ENCODE measurements at regions of chr3 and their contacts with region 1.

Region 1: DNA sequence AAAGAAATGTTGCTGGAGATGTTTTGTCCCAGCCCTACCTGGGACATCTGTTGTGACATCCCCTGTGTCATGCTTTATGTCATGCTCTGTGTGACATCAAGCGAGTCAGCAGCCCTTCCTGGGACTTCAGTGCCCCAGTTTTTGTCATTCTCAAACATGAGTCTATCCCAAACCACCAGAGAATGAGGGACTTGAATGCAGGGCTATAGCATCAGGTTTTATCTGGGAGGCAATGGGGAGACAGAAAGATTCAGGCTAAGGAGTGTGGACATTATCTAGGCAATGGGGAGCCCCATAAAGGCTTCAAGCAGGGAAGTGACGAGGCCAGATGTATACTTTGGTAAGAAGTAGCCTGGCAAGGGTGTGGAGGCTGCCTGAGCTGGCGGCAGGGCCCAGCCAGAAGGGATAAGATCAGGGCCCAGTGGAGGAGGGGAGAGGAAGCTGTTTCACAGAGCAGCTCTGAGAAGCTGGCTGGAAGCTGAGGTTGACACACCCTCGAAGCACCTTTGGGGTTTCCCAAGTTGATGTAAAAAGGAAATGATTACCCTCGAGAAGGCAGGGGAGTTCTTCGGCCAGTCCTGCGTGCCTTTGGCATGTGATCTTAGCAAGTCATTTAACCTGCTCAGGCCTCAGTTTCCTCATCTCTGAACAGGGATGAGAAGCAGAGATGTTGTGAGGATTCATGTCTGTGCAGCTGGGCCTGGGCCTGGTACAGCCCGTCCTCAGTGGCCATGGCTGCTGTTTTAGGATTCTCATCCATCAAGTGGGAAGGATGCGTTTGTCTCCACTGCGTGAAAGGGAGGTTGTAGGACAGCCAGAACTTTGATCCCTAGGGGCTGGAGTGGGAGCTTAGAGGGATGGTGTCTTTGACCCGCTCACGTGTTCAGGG is 34.3 kb downstream of the IRAK2 start:
- DNase-seq: peak; percentile 91
- H3K4me3 Mint-ChIP-seq: peak overlapping the region; percentile 22
- H3K27ac Mint-ChIP-seq: peak overlapping the region; percentile 98
- H3K4me1 Mint-ChIP-seq: peaks cover 71% of the 10 kb centered on the region
- H3K27me3 Mint-ChIP-seq: no peaks in the 10 kb centered on the region

Region 2: DNA sequence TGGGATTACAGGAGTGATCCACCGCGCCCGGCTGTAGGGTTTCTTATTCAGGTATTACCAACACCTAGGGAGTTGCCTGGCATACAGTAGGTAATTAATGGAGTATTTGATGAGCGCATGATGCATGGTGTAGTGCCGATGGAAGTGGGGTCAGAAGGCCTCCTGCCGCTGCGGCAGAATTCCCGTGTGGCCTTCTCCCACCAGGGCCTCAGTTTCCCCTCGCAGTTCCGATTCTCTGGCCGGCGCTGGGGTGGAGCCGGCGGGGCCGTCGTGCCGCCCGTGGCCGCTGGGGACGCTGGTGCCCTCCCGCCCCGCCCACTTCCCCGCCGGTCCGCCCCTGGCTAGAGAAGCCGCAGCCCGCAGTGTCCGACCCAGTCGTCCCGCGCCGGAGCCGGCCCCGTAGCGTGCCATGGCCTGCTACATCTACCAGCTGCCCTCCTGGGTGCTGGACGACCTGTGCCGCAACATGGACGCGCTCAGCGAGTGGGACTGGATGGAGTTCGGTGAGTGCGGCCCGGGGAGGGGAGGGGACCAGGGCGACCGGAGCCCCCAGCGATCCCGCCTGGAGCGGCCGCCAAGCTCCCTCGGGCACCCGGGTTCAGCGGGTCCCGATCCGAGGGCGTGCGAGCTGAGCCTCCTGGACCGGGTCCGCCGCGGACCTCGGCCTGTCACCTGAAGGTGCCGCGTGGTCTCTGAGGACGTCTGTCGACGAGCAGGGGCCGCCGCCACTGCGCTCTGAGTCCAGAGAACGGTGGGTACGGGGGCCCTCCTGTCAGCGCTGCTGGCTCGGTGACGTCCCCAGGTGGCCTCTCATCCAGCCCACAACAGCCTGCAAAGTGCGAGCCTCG is 34.2 kb before region 1 on chr3 and contains the start of gene IRAK2:
- CTCF ChIA-PET with region 1: interaction called, 5 read pairs
- intact Hi-C with region 1: loop called (anchors 2 kb)
- DNase-seq: peak; percentile 62
- H3K4me3 Mint-ChIP-seq: peak within 1 kb of the TSS; percentile 75
- H3K27ac Mint-ChIP-seq: no peak within 1 kb of the TSS
- H3K4me1 Mint-ChIP-seq: peaks cover 23% of the 10 kb centered on the region
- H3K27me3 Mint-ChIP-seq: no peaks in the 10 kb centered on the region
- total RNA-seq, gene IRAK2: 6.4 to 6.9 TPM

Region 3: DNA sequence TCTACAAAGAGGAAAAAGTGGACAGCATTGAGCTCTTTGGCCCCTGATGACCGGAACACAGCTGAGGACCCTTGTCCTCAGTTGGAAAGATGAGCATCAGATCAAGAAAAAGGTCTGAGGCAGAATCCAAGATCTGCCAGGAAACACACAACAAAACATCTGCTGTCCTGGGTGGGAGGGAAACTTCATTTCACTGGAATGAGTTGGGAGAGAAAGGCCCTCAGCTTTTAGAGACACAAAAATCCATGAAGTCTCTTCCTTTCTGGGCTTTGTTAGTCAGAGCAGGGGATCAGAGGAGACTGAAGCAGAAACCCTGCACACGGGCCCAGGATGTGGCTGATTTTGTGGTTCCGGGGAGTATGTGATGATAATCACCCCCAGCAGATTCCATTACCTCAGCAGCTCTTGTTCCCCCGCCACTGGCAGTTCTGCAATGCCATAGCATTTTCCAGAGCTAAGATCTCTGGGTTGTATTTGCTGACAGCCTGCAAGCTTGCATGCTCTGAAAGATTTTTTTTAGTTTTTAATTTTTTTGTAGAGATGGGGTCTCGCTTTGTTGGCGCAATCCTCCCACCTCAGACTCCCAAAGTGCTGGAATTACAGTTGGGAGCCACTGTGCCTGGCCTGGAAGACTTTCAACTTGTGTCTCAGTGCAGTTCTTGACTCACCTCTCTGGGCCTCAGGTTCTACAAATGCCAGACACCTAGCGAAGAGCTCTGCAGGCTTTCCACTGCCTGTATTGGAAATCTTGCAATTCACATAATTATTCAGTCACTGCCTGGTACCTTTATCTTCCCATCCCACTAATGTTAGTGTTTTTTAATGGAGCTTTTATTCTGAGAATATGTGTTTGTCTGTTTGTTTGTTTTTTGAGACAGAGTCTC is 43.4 kb after region 1 on chr3:
- CTCF ChIA-PET with region 1: no interaction called
- intact Hi-C with region 1: loop called (anchors 1 kb)
- DNase-seq: peak; percentile 91
- H3K4me3 Mint-ChIP-seq: peak overlapping the region; percentile 36
- H3K27ac Mint-ChIP-seq: peak overlapping the region; percentile 83
- H3K4me1 Mint-ChIP-seq: peaks cover 64% of the 10 kb centered on the region
- H3K27me3 Mint-ChIP-seq: no peaks in the 10 kb centered on the region

Region 4: DNA sequence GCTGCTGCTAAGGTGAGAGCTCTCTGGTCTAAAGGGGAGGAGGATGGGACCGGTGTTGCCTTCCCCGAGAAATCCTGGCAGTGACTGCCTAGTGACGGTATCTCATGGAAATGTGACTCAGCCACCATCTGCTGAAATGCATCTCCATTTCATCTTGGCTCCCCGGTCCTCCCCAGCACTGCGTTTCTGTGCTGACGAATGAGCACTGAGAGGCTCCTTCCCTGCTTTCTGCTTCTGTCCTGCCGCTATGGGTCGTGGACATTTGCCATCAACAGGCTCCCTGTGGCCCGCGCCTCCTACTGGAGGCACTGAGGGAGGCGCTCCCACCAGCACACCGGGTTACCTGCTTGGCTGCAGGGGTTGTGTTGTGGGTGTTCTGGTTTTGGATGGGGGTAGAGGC is 135.5 kb after region 1 on chr3:
- CTCF ChIA-PET with region 1: no interaction called
- intact Hi-C with region 1: no loop called
- DNase-seq: no peak
- H3K4me3 Mint-ChIP-seq: no peak overlapping the region
- H3K27ac Mint-ChIP-seq: no peak overlapping the region
- H3K4me1 Mint-ChIP-seq: no peaks in the 10 kb centered on the region
- H3K27me3 Mint-ChIP-seq: peaks cover 5% of the 10 kb centered on the region

Measured in activated naive CD4-positive, alpha-beta T cell treated with anti-CD3 and anti-CD28 coated beads for 36 hours (primary cell).